PC-9 (cell line): ENCODE measurements at regions of chr1 and their contacts with region 1.

Region 1: DNA sequence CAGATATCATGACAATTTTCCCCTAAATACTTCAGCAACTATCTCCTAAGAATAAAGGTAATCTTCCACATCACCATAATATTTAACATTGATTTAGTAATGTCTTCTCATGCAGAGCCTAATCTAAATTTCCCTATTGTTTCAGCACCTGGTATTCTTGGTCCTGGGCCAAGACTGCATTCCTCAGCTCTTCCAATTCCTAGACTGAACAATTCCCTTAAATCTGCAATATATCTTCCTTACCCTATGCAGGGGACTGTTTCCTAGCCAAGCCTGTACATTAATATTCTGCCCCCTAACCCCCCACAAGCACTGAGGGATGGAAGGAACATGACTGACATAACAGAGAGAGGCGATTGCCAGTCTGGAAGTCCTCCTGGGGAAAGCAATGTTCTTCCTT is 28.7 kb upstream of the DISP1 start:
- DNase-seq: peak in 1 of 2 experiments; percentile 41
- H3K4me3 ChIP-seq: no peak overlapping the region
- H3K27ac ChIP-seq: no peak overlapping the region
- H3K4me1 ChIP-seq: peaks cover 11% of the 10 kb centered on the region
- H3K27me3 ChIP-seq: peaks cover 73% of the 10 kb centered on the region
- CTCF ChIP-seq: no peak

Region 2: GRCh38 chr1:222736972-222737371 is 49.1 kb before region 1 on chr1 and contains the start of gene FAM177B:
- CTCF ChIA-PET with region 1: no interaction called
- POLR2A ChIA-PET with region 1: no interaction called
- intact Hi-C with region 1: loop called (anchors 5 kb)
- DNase-seq: peak in 1 of 2 experiments; percentile 44
- H3K4me3 ChIP-seq: no peak within 1 kb of the TSS
- H3K27ac ChIP-seq: no peak within 1 kb of the TSS
- H3K4me1 ChIP-seq: peaks cover 7% of the 10 kb centered on the region; the same call in 1 of the 2 replicates
- H3K27me3 ChIP-seq: no peaks in the 10 kb centered on the region
- CTCF ChIP-seq: no peak
- total RNA-seq, gene FAM177B: not detected in 2 replicates